Thyroid gland (tissue), 4 donors: ENCODE measurements at regions of chr2 and their contacts with region 1.

Region 1: GRCh38 chr2:219294356-219295351 is 14.5 kb downstream of the PTPRN start:
- DNase-seq: peak; percentile 86 to 90
- H3K4me3 ChIP-seq: peak overlapping the region in 1 of 3 donors; percentile 45
- H3K27ac ChIP-seq: peak overlapping the region in 2 of 3 donors; percentile 54 to 56
- H3K4me1 ChIP-seq: peaks cover 4 to 14% of the 10 kb centered on the region in 2 donors
- H3K27me3 ChIP-seq: no peaks in the 10 kb centered on the region
- CTCF ChIP-seq: peak; percentile 60 to 100 (median 99)
- POLR2A ChIP-seq: peak in 1 of 2 donors; percentile 41

Region 2: GRCh38 chr2:219057709-219058540 is 236.7 kb before region 1 on chr2:
- intact Hi-C with region 1: loop called (anchors 5 kb)
- DNase-seq: peak; percentile 67 to 75
- H3K4me3 ChIP-seq: no peak overlapping the region
- H3K27ac ChIP-seq: no peak overlapping the region
- H3K4me1 ChIP-seq: peaks cover 21 to 36% of the 10 kb centered on the region in 2 donors
- H3K27me3 ChIP-seq: peaks cover 42% of the 10 kb centered on the region
- CTCF ChIP-seq: peak; percentile 75 to 98 (median 92)
- POLR2A ChIP-seq: no peak

Region 3: DNA sequence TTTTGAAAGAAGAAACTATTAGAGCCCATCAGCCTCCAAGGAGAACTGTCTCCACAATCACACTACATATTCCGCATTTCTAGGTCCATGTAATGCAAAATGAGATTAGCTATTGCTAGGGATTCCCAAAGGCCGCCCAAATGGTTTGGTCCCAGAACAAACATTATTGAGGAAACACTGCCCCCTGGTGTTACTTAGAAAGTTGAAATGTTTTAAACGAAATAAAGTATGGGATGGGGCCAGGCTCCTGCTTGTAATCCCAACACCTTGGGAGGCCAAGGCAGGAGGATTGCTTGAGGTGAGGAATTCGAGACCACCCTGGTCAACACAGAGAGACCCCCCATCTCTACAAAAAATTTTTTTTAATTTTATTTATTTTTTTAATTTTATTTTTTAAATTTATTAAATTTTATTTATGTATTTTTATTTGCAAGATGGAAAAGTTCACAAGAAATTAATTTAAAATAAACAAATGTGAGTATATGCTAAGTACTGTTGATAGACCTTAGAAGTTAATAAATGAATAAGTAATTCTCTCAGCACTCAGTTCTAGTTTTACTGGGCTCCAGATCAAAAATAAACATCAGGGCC is 139.5 kb before region 1 on chr2:
- intact Hi-C with region 1: loop called (anchors 5 kb)
- DNase-seq: peak; percentile 12 to 22
- H3K4me3 ChIP-seq: no peak overlapping the region
- H3K27ac ChIP-seq: no peak overlapping the region
- H3K4me1 ChIP-seq: peaks cover 0 to 6% of the 10 kb centered on the region in 2 donors
- H3K27me3 ChIP-seq: no peaks in the 10 kb centered on the region
- CTCF ChIP-seq: peak in 5 of 6 experiments; percentile 33 to 67 (median 59)
- POLR2A ChIP-seq: no peak

Region 4: GRCh38 chr2:219278655-219279516 is 15.8 kb before region 1 on chr2 and contains the start of gene DNAJB2:
- intact Hi-C with region 1: loop called (anchors 2 kb)
- DNase-seq: peak; percentile 99
- H3K4me3 ChIP-seq: peak within 1 kb of the TSS; percentile 47 to 89 (median 74)
- H3K27ac ChIP-seq: peak within 1 kb of the TSS; percentile 99
- H3K4me1 ChIP-seq: peaks cover 18 to 32% of the 10 kb centered on the region in 2 donors
- H3K27me3 ChIP-seq: no peaks in the 10 kb centered on the region
- CTCF ChIP-seq: peak in 1 of 6 experiments; percentile 4
- POLR2A ChIP-seq: peak in 1 of 2 donors; percentile 97
- total RNA-seq, gene DNAJB2: 79.0 to 127 (median 116) TPM

Region 5: GRCh38 chr2:219530048-219530963 is 235.7 kb after region 1 on chr2:
- intact Hi-C with region 1: no loop called
- DNase-seq: peak; percentile 72 to 84
- H3K4me3 ChIP-seq: no peak overlapping the region
- H3K27ac ChIP-seq: no peak overlapping the region
- H3K4me1 ChIP-seq: no peaks in the 10 kb centered on the region
- H3K27me3 ChIP-seq: no peaks in the 10 kb centered on the region
- CTCF ChIP-seq: peak; percentile 86 to 99 (median 97)
- POLR2A ChIP-seq: no peak